ENCODE measurements at regions of chr5 and their contacts with region 1.

Region 1: GRCh38 chr5:132456296-132457001 is 34.1 kb downstream of the IRF1 start:
- DNase-seq: peak; percentile 80
- H3K4me3 ChIP-seq: peak overlapping the region; percentile 47
- H3K27ac ChIP-seq: peak overlapping the region; percentile 82
- H3K4me1 ChIP-seq: peaks cover 70% of the 10 kb centered on the region
- CTCF ChIP-seq: no peak

Region 2: DNA sequence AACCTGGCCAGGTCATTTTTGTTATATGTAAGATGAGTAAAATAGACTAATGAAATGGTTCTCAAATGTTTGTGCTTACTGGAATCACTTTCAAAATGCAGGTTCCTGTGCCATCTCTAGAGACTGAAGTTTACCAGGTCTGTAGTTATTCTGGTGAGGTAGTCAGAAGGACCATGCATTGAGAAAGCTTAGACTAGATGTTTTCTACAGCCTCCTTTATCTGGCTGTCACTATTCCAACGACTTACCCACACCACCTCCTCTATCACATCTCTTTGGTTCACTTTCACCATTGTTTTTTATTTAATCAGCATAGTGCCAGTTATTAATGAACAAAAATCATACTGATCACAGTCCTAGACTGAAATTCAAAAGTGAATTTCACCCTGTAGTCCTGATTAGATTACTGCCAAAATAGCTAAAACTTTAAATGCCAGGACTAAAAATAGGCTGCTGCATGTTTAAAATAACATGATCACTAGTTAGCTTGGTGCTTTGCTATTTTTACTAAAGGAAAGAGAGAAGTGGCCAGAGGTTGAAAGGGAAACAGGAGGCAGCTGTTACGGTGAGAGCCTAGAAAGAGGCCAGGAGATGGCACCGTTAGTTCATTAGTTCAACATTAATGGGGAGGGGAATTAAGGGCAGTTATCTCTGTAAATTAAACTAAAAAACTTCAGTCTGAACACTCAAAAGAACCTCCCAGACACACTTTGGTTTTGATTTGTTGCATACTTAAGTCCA is 645.8 kb before region 1 on chr5:
- CTCF ChIA-PET with region 1: no interaction called
- POLR2A ChIA-PET with region 1: no interaction called
- intact Hi-C with region 1: no loop called
- DNase-seq: peak; percentile 13
- H3K4me3 ChIP-seq: no peak overlapping the region
- H3K27ac ChIP-seq: no peak overlapping the region
- H3K4me1 ChIP-seq: no peaks in the 10 kb centered on the region
- CTCF ChIP-seq: peak; percentile 57

Region 3: DNA sequence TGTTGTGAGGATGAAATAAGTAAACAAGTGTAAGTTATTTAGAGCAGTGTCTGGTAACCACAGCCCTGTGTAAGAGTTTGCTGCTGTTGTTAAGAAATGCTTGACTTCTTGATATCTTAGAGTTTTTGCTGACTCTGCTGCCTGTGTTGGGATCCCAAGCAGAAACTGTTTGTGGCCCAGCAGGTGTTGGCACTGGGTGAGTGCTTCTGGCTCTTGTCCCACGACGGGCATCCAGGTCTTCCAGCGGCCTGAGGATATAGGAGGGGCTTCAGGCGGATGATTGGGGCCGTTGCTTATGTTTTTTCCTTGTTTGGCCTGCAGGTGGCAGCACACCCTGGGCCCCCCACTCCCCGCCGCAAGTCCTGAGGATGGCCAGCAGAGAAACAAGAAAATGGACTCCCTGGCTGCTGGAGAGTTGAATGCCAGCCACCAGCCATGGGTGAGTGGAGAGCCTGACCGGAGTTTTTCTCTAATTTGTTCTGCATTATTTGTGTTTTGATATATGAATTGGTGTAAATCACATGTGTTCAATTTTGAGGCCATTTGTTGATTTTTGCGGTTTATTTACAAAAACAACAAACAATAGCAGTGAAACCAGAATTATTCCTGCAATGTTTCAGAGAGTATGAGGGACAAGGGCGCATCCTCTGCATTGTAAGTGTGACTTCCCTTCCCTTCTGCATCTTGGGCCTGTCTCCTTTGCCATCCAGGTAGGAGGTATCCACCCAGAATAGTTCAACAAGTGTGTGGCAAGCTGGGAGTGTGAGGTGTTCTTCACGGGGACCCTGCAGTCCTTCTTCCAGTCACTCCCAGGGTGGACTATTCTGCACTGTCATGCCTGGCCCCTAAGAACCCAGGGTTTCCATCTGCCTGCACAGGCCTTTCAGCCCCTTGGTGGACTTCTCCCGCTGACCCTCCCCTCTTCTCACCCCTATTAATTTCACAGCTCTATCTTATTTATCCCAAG is 36.7 kb before region 1 on chr5:
- CTCF ChIA-PET with region 1: interaction called, 6 read pairs
- POLR2A ChIA-PET with region 1: interaction called, 21 read pairs
- intact Hi-C with region 1: no loop called
- DNase-seq: peak; percentile 82
- H3K4me3 ChIP-seq: peak overlapping the region; percentile 62
- H3K27ac ChIP-seq: peak overlapping the region; percentile 96
- H3K4me1 ChIP-seq: peaks cover 84% of the 10 kb centered on the region
- CTCF ChIP-seq: peak; percentile 95

Region 4: GRCh38 chr5:132426525-132427138 is 29.8 kb before region 1 on chr5:
- CTCF ChIA-PET with region 1: interaction called, 5 read pairs
- POLR2A ChIA-PET with region 1: interaction called, 21 read pairs
- intact Hi-C with region 1: loop called (anchors 2 kb)
- DNase-seq: peak; percentile 87
- H3K4me3 ChIP-seq: peak overlapping the region; percentile 37
- H3K27ac ChIP-seq: peak overlapping the region; percentile 96
- H3K4me1 ChIP-seq: peaks cover 100% of the 10 kb centered on the region
- CTCF ChIP-seq: peak; percentile 66

Region 5: DNA sequence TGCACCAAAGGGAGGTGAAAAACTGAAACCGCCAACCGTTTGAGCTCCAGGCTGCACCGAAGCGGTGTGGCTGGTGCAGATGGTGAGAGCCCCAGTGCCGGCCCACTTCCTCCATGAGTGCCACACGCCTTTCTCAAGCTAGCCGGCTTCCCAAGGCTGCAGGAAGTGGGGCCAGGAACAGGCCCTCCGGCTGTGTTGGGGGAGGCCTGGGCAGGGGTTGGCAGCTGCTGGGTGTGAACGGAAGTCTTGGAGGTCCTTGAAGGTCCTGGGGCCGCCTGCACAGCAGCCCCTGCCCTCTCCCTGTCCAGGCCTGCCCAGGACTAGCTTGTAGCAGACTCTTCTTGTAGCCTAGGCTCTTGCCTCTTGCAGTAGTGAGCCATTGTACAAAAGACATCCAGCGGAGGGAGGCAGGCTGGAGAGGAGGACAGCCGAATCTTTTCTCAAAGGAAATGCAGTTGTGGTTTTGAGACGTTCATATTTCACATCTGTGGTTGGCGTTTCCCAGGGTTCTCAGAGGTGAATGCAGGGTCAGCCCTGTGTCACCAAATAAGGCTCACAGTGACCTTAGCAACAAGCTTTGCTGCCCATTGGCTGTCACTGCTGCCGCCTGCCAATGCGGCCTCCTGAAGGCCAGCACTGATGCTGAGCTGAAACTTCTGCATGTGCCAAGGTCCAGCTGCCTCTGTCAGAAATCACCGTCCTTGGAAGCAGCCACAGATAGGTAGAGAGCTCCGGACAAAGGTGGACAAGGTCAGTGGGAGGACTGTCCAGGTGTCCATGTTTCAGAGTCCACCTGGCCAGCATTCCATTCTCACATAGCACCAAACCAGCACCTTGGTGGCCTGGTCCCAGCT is 10.2 kb after region 1 on chr5:
- CTCF ChIA-PET with region 1: interaction called, 3 read pairs
- POLR2A ChIA-PET with region 1: interaction called, 26 read pairs
- intact Hi-C with region 1: no loop called
- DNase-seq: peak; percentile 84
- H3K4me3 ChIP-seq: peak overlapping the region; percentile 48
- H3K27ac ChIP-seq: peak overlapping the region; percentile 61
- H3K4me1 ChIP-seq: peaks cover 68% of the 10 kb centered on the region
- CTCF ChIP-seq: no peak

Region 6: DNA sequence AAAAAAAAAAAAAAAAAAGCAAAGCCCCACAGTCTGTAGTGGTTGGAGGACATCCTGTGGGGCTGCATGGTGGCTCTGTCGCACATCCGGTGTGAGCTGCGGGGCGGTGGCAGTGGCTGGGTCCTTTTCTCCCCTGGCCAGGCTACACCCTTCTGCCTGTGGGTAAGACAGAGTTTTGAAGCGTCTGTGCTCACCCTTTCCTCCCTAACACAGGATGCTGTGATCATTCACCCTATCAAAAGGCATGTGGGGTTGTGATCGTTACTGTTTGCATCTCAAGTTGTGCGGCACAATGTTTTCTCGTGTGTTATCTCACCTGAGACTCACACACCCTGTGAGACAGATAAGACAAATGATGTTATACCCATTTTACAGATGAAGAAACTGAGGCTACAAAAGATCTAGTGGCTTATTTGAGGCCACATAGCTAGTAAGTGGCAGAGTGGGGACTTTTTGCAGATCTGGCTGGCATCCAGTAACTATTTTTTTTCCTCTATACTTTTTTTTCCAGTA is 16.6 kb after region 1 on chr5:
- CTCF ChIA-PET with region 1: interaction called, 3 read pairs
- POLR2A ChIA-PET with region 1: interaction called, 26 read pairs
- intact Hi-C with region 1: no loop called
- DNase-seq: peak; percentile 78
- H3K4me3 ChIP-seq: no peak overlapping the region
- H3K27ac ChIP-seq: peak overlapping the region; percentile 37
- H3K4me1 ChIP-seq: peaks cover 49% of the 10 kb centered on the region
- CTCF ChIP-seq: no peak

Region 7: GRCh38 chr5:132479111-132479951 is 22.9 kb after region 1 on chr5:
- CTCF ChIA-PET with region 1: no interaction called
- POLR2A ChIA-PET with region 1: interaction called, 26 read pairs
- intact Hi-C with region 1: no loop called
- DNase-seq: no peak
- H3K4me3 ChIP-seq: no peak overlapping the region
- H3K27ac ChIP-seq: no peak overlapping the region
- H3K4me1 ChIP-seq: peaks cover 21% of the 10 kb centered on the region
- CTCF ChIP-seq: no peak

Region 8: DNA sequence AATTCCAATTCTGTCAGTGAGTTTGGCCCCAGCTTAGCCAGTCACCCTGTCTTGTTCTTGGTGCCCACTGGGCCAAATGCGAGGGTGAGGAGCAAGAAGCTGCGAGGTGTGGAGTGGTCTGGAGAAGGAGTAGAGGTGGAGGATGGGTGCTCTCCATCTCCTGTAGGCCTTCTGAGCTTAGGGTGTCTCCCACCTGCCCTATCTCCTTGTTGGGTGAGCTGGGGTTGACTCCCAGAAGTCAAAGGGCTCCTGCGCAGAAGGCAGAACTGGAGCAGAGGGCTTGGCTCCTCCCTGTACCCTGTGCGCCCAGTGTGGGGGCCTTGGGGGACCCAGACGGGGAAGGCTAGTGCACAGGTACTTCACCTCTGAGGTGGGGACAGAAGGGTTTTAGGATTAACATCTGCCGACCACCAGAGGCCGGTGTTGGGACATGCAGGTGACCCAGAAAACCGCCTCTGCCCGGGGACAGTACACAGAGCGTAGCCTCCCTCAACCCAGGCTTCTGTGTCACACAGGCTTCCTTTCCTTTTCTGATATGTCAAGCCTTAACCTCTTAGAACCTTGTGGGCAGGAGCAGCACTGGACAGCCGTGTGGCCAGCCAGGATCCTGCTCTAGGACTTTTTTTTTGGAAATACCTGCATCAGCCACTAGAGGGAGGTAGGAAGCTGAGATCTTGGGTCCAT is 70.0 kb after region 1 on chr5:
- CTCF ChIA-PET with region 1: no interaction called
- POLR2A ChIA-PET with region 1: no interaction called
- intact Hi-C with region 1: no loop called
- DNase-seq: peak; percentile 65
- H3K4me3 ChIP-seq: no peak overlapping the region
- H3K27ac ChIP-seq: no peak overlapping the region
- H3K4me1 ChIP-seq: peaks cover 29% of the 10 kb centered on the region
- CTCF ChIP-seq: peak; percentile 100

Region 9: GRCh38 chr5:133075572-133076536 is 619.4 kb after region 1 on chr5:
- CTCF ChIA-PET with region 1: no interaction called
- POLR2A ChIA-PET with region 1: no interaction called
- intact Hi-C with region 1: no loop called
- DNase-seq: no peak
- H3K4me3 ChIP-seq: no peak overlapping the region
- H3K27ac ChIP-seq: no peak overlapping the region
- H3K4me1 ChIP-seq: no peaks in the 10 kb centered on the region
- CTCF ChIP-seq: no peak